ENCODE measurements at regions of chr16 and their contacts with region 1.

Region 1: DNA sequence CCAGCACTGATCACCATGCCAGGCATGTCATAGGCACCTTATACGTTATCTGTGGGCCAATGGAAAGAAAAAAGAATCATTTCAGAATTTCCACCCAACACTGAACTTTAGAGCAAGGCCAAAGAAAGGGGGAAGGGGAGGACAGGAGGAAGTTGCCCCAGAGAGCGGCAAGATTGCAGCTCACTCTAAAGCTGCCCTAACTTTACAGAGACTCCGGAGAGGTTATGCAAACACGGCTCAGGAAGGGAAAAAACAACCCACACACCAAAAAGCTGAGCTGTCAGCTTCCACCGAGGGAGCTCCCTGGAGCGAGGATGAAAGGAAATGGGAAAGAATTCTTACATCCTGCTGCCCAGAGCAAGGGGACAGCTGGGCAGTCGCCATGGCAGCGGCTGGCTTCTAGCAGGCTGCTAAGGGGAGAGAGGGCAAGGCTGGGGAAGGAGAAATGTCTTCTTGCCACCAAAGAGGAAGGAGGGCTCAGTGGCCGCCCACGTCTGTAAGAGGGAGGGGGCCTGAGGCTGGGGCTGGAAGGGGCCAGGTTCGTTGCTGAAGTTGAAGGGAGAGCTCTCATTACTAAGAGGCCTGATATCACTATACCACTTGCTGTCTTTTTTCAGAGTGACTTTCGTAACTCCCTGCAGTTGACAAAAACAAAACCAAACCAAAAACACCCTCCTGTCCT is 18.2 kb downstream of the COTL1 start:
- DNase-seq: peak in 4 of 5 donors; percentile 37 to 72 (median 48)
- H3K4me3 ChIP-seq: peak overlapping the region; percentile 57
- H3K4me3 Mint-ChIP-seq: peak overlapping the region; percentile 82 to 92 (median 88)
- H3K27ac ChIP-seq: peak overlapping the region; percentile 89
- H3K27ac Mint-ChIP-seq: peak overlapping the region; percentile 94 to 98 (median 95)
- H3K4me1 ChIP-seq: peaks cover 97% of the 10 kb centered on the region
- H3K4me1 Mint-ChIP-seq: peaks cover 72 to 96% (median 84%) of the 10 kb centered on the region in 4 donors
- H3K27me3 ChIP-seq: no peaks in the 10 kb centered on the region
- H3K27me3 Mint-ChIP-seq: no peaks in the 10 kb centered on the region

Region 2: DNA sequence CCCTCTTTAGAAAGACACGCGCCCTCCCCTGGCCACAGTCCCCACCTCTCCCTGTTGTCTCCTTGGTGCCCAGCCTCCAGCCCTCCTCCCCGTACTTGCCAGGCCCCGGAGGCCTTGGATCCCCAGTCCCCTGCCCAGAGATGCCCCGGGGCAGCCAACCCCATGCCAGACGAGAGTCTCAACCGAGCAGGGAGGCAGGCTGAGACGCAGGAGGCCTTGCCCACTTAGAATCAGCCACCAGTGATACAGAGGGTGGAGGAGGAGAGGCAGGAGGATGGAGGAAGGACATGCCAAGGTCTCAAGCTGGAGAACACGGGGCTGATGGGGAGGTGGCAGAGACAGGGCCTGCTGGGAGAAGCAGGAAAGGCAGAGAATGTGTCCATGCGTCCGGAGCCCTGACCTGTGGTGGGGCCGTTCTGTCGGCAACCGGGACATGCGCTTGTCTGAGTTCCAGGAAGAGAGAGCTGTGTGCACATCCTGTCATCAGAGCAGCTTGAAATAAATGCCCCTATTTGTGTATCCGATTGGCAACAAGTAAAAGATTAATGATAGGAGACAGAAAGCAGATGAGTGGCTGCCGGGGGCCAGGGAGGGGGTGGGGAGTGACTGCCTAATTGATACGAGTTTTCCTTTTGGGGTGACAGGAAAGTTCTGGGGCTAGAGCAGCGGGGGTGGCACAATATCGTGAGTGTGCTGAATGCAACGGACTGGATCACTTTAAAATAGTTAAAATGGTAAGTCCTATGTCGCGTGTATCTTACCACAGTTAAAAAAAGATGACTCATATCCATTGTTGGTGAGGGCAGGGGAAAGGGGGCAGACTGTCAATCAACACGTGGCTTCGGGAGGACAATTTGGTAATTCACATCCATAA is 50.5 kb before region 1 on chr16:
- CTCF ChIA-PET with region 1: interaction called, 7 read pairs
- POLR2A ChIA-PET with region 1: interaction called, 245 read pairs
- intact Hi-C with region 1: loop called (anchors 2 kb)
- DNase-seq: peak; percentile 63 to 74 (median 70)
- H3K4me3 ChIP-seq: peak overlapping the region; percentile 49 to 60
- H3K4me3 Mint-ChIP-seq: peak overlapping the region; percentile 84 to 96 (median 91)
- H3K27ac ChIP-seq: peak overlapping the region; percentile 81
- H3K27ac Mint-ChIP-seq: peak overlapping the region; percentile 91 to 99 (median 97)
- H3K4me1 ChIP-seq: peaks cover 78% of the 10 kb centered on the region
- H3K4me1 Mint-ChIP-seq: peaks cover 51 to 77% (median 63%) of the 10 kb centered on the region in 4 donors
- H3K27me3 ChIP-seq: no peaks in the 10 kb centered on the region
- H3K27me3 Mint-ChIP-seq: no peaks in the 10 kb centered on the region

Region 3: GRCh38 chr16:84555418-84556195 is 44.1 kb before region 1 on chr16:
- CTCF ChIA-PET with region 1: interaction called, 7 read pairs
- POLR2A ChIA-PET with region 1: interaction called, 245 read pairs
- intact Hi-C with region 1: loop called (anchors 2 kb)
- DNase-seq: no peak
- H3K4me3 ChIP-seq: no peak overlapping the region
- H3K4me3 Mint-ChIP-seq: peak overlapping the region in 2 of 8 donors; percentile 11 to 24
- H3K27ac ChIP-seq: no peak overlapping the region
- H3K27ac Mint-ChIP-seq: peak overlapping the region in 5 of 7 donors; percentile 55 to 87 (median 86)
- H3K4me1 ChIP-seq: peaks cover 49% of the 10 kb centered on the region
- H3K4me1 Mint-ChIP-seq: peaks cover 30 to 51% (median 42%) of the 10 kb centered on the region in 4 donors
- H3K27me3 ChIP-seq: no peaks in the 10 kb centered on the region
- H3K27me3 Mint-ChIP-seq: no peaks in the 10 kb centered on the region

Region 4: GRCh38 chr16:84663433-84664101 is 63.9 kb after region 1 on chr16:
- CTCF ChIA-PET with region 1: no interaction called
- POLR2A ChIA-PET with region 1: no interaction called
- intact Hi-C with region 1: no loop called
- DNase-seq: no peak
- H3K4me3 ChIP-seq: no peak overlapping the region
- H3K4me3 Mint-ChIP-seq: no peak overlapping the region
- H3K27ac ChIP-seq: no peak overlapping the region
- H3K27ac Mint-ChIP-seq: no peak overlapping the region
- H3K4me1 ChIP-seq: no peaks in the 10 kb centered on the region
- H3K4me1 Mint-ChIP-seq: peaks cover 4 to 24% (median 6%) of the 10 kb centered on the region in 4 donors
- H3K27me3 ChIP-seq: no peaks in the 10 kb centered on the region
- H3K27me3 Mint-ChIP-seq: no peaks in the 10 kb centered on the region

Region 5: GRCh38 chr16:84746882-84747281 is 147.2 kb after region 1 on chr16:
- CTCF ChIA-PET with region 1: no interaction called
- POLR2A ChIA-PET with region 1: no interaction called
- intact Hi-C with region 1: no loop called
- DNase-seq: no peak
- H3K4me3 ChIP-seq: no peak overlapping the region
- H3K4me3 Mint-ChIP-seq: no peak overlapping the region
- H3K27ac ChIP-seq: no peak overlapping the region
- H3K27ac Mint-ChIP-seq: no peak overlapping the region
- H3K4me1 ChIP-seq: peaks cover 16% of the 10 kb centered on the region
- H3K4me1 Mint-ChIP-seq: peaks cover 25 to 37% (median 33%) of the 10 kb centered on the region in 4 donors
- H3K27me3 ChIP-seq: no peaks in the 10 kb centered on the region
- H3K27me3 Mint-ChIP-seq: no peaks in the 10 kb centered on the region

Region 6: GRCh38 chr16:85137323-85138072 is 537.8 kb after region 1 on chr16:
- CTCF ChIA-PET with region 1: no interaction called
- POLR2A ChIA-PET with region 1: no interaction called
- intact Hi-C with region 1: no loop called
- DNase-seq: no peak
- H3K4me3 ChIP-seq: no peak overlapping the region
- H3K4me3 Mint-ChIP-seq: peak overlapping the region in 1 of 8 donors; percentile 45
- H3K27ac ChIP-seq: no peak overlapping the region
- H3K27ac Mint-ChIP-seq: no peak overlapping the region
- H3K4me1 ChIP-seq: no peaks in the 10 kb centered on the region
- H3K4me1 Mint-ChIP-seq: peaks cover 0 to 8% (median 5%) of the 10 kb centered on the region in 4 donors
- H3K27me3 ChIP-seq: no peaks in the 10 kb centered on the region
- H3K27me3 Mint-ChIP-seq: peaks cover 24 to 26% of the 10 kb centered on the region in 2 donors

Measured in CD4-positive, alpha-beta memory T cell (primary cell).